Activated T-helper 1 cell treated with anti-CD3 and anti-CD28 coated beads, Interleukin-12 subunit alpha, Interleukin-12 subunit beta, Interleukin-2, Interleukin-4 antibody, amounts not matched to agents 30 ng/mL and 10 ng/mL and 1 ng/mL, durations not matched to agents 14 hours and 24 hours and 36 hours (primary cell): ENCODE measurements at regions of chr1 and their contacts with region 1.

Region 1: GRCh38 chr1:85276215-85276977 is at the start of gene BCL10:
- DNase-seq: peak; percentile 98
- H3K4me3 Mint-ChIP-seq: peak within 1 kb of the TSS; percentile 88
- H3K27ac Mint-ChIP-seq: peak within 1 kb of the TSS; percentile 87
- H3K4me1 Mint-ChIP-seq: peaks cover 67% of the 10 kb centered on the region
- H3K27me3 Mint-ChIP-seq: peaks cover 11% of the 10 kb centered on the region
- total RNA-seq, gene BCL10: 25.1 and 28.8 TPM in 2 replicates

Region 2: GRCh38 chr1:84506002-84506728 is 770.2 kb before region 1 on chr1 and contains the starts of genes GNG5 and SPATA1:
- intact Hi-C with region 1: loop called (anchors 2 kb)
- DNase-seq: peak; percentile 96
- H3K4me3 Mint-ChIP-seq: peak within 1 kb of the TSS; percentile 98
- H3K27ac Mint-ChIP-seq: peak within 1 kb of the TSS; percentile 98
- H3K4me1 Mint-ChIP-seq: peaks cover 38% of the 10 kb centered on the region
- H3K27me3 Mint-ChIP-seq: no peaks in the 10 kb centered on the region
- total RNA-seq, gene GNG5: 107 and 110 TPM in 2 replicates
- total RNA-seq, gene SPATA1: 1.2 and 1.3 TPM in 2 replicates

Region 3: DNA sequence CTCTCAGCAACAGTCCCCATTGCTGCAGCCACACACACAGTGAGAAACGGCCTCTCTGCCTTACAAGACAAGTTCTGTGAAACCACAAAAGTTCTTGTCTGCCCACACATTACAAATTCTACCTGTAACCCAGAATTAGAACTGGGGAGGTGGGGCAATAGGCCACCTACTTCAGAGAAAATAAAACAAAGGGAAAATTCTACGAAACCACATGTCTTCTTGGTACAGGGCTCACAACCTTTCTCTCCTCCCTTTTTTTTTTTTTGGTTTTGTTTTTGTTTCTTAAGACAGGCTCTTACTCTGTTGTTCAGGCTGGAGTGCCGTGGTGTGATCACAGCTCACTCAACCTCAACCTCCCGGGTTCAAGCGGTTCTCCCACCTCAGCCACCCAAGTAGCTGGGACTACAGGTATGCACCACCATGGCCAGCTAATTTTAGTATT is 413.6 kb before region 1 on chr1:
- intact Hi-C with region 1: loop called (anchors 5 kb)
- DNase-seq: peak; percentile 66
- H3K4me3 Mint-ChIP-seq: peak overlapping the region; percentile 77
- H3K27ac Mint-ChIP-seq: peak overlapping the region; percentile 82
- H3K4me1 Mint-ChIP-seq: peaks cover 53% of the 10 kb centered on the region
- H3K27me3 Mint-ChIP-seq: peaks cover 1% of the 10 kb centered on the region

Region 4: GRCh38 chr1:84907095-84907827 is 369.1 kb before region 1 on chr1:
- intact Hi-C with region 1: no loop called
- DNase-seq: no peak
- H3K4me3 Mint-ChIP-seq: no peak overlapping the region
- H3K27ac Mint-ChIP-seq: no peak overlapping the region
- H3K4me1 Mint-ChIP-seq: no peaks in the 10 kb centered on the region
- H3K27me3 Mint-ChIP-seq: peaks cover 22% of the 10 kb centered on the region

Region 5: DNA sequence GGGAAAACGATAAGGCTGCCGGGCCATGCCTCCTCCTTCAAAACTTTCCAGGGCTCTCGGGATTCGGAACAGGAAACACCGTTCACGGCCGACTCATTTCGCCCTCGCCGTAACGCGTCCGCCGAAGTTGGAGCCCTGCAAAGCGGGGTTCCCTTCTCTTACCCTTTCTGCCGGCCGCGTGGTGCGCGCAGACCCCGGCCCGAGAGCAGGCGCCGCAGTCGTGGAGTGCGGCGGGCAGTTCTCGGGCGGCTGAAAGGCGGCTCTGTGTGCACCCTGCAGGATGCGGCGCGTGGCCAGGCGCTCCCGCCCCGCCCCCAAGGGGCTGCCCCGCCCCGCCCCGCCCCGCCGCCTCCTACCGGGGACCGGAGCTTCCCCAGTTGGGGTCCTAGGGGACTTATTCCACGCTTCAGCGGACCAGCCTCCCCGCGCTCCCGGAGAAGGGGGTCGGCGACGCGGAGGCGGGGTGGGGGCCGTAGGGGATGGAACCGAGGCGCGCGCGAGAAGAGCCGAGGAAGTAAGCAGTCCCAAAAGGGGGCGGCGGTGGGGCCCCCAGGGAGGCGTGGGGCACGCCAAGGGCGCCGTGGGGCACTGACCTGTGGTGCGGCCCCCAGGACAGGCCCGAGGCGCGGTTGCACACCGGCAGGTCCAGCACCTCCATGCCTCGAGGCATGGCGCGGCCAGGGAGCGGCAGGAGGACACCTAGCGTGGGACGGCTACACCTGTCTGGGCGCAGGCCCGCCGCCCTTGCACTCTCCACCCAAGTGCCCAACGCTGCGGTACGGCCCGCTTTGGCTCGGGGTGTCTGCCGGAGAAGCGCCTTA is 279.3 kb before region 1 on chr1 and contains the start of gene MCOLN2:
- intact Hi-C with region 1: loop called (anchors 5 kb)
- DNase-seq: peak; percentile 52
- H3K4me3 Mint-ChIP-seq: peak within 1 kb of the TSS; percentile 88
- H3K27ac Mint-ChIP-seq: peak within 1 kb of the TSS; percentile 88
- H3K4me1 Mint-ChIP-seq: peaks cover 55% of the 10 kb centered on the region
- H3K27me3 Mint-ChIP-seq: peaks cover 12% of the 10 kb centered on the region
- total RNA-seq, gene MCOLN2: 117 and 119 TPM in 2 replicates

Region 6: DNA sequence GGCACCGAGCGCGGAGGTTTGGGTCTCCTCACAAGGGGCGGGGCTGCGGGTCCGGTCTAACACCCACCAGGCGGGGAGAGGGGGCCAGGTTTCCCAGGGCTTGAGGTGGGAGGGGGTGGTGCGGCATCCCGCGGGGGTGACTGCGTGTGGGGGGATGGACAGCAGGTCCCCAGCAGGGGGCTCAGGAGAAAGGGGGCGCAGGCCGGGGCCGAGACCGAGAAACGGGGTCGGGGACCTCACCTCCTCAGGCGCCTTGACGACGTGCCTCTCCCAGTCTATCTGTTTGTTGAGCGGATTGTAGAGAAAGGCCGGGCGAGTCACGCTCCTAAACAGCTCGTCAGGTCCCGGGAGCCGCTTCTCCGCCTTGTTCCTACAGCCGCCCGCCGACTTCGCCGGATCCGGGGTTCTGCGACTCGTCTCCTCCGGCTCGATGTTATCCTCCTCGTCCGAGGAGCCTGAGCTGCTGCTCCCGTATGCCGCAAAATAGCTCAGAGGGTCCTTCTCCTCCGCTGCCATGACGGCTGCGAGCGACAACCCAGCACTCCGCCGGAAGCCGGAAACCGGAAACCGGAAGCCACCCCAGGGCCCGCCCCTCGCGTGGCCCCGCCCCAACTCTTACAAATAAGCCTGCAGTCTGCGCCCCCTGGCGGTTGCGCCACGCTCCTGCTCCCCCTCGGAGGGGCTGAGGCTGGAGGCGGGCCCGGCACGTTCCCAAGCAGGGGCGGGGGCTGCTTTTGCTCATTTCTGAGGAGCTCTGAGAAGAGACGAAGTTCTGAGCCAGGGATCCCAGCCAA is 17.1 kb before region 1 on chr1 and contains the start of gene C1orf52:
- intact Hi-C with region 1: loop called (anchors 1 kb)
- DNase-seq: peak; percentile 96
- H3K4me3 Mint-ChIP-seq: peak within 1 kb of the TSS; percentile 96
- H3K27ac Mint-ChIP-seq: peak within 1 kb of the TSS; percentile 90
- H3K4me1 Mint-ChIP-seq: peaks cover 40% of the 10 kb centered on the region
- H3K27me3 Mint-ChIP-seq: no peaks in the 10 kb centered on the region
- total RNA-seq, gene C1orf52: 30.9 and 31.6 TPM in 2 replicates

Region 7: GRCh38 chr1:85623051-85623471 is 346.7 kb after region 1 on chr1:
- intact Hi-C with region 1: loop called (anchors 1 kb)
- DNase-seq: no peak
- H3K4me3 Mint-ChIP-seq: no peak overlapping the region
- H3K27ac Mint-ChIP-seq: peak overlapping the region; percentile 18
- H3K4me1 Mint-ChIP-seq: peaks cover 15% of the 10 kb centered on the region
- H3K27me3 Mint-ChIP-seq: no peaks in the 10 kb centered on the region

Region 8: GRCh38 chr1:86913896-86914634 is 1637.7 kb after region 1 on chr1 and contains the start of gene SELENOF:
- intact Hi-C with region 1: loop called (anchors 5 kb)
- DNase-seq: peak; percentile 98
- H3K4me3 Mint-ChIP-seq: no peak within 1 kb of the TSS
- H3K27ac Mint-ChIP-seq: no peak within 1 kb of the TSS
- H3K4me1 Mint-ChIP-seq: peaks cover 38% of the 10 kb centered on the region
- H3K27me3 Mint-ChIP-seq: no peaks in the 10 kb centered on the region
- total RNA-seq, gene SELENOF: 174 and 198 TPM in 2 replicates